GM12878 (cell line): ENCODE measurements at regions of chr1 and their contacts with region 1.

Region 1: DNA sequence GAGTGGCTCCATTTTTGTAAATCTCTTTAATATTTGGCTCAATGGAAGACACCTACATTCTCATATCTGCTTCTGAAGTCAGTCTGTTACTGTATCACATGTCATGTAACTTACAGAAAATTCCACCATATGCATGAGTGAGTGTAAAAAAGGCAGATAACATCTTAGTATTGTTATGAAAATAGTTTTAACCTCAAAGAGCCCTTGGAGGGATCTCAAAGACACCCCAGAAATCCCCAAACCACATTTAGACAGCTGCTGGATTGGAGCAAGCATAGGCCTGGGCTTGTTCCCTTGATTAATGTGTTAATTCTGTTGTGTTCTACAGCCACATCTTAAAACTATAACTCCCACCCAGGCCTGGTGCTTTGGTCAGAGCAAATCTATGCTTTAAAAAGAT is 16.9 kb downstream of the MACO1 start:
- DNase-seq: peak; percentile 79
- ATAC-seq: peak; percentile 94
- H3K4me3 ChIP-seq: no peak overlapping the region
- H3K27ac ChIP-seq: peak overlapping the region; percentile 62; the same call in 1 of the 2 replicates
- H3K4me1 ChIP-seq: peaks cover 37% of the 10 kb centered on the region
- H3K27me3 ChIP-seq: no peaks in the 10 kb centered on the region
- CTCF ChIP-seq: no peak
- EP300 ChIP-seq: peak; percentile 70 to 93
- POLR2A ChIP-seq: no peak
- RAD21 ChIP-seq: no peak

Region 2: GRCh38 chr1:25469177-25469576 is 21.6 kb after region 1 on chr1:
- CTCF ChIA-PET with region 1: interaction called, 6 read pairs
- POLR2A ChIA-PET with region 1: interaction called, 17 read pairs
- RAD21 ChIA-PET with region 1: interaction called, 5 read pairs
- SMC1A ChIA-PET with region 1: interaction called, 52 read pairs
- in situ Hi-C with region 1: no loop called
- intact Hi-C with region 1: no loop called
- DNase-seq: no peak
- ATAC-seq: no peak
- H3K4me3 ChIP-seq: no peak overlapping the region
- H3K27ac ChIP-seq: no peak overlapping the region
- H3K4me1 ChIP-seq: peaks cover 11% of the 10 kb centered on the region
- H3K27me3 ChIP-seq: no peaks in the 10 kb centered on the region
- CTCF ChIP-seq: no peak
- EP300 ChIP-seq: no peak
- POLR2A ChIP-seq: no peak
- RAD21 ChIP-seq: no peak

Region 3: GRCh38 chr1:25476186-25477097 is 28.9 kb after region 1 on chr1:
- CTCF ChIA-PET with region 1: interaction called, 36 read pairs
- POLR2A ChIA-PET with region 1: interaction called, 54 read pairs
- RAD21 ChIA-PET with region 1: interaction called, 56 read pairs
- SMC1A ChIA-PET with region 1: interaction called, 52 read pairs
- in situ Hi-C with region 1: no loop called
- intact Hi-C with region 1: no loop called
- DNase-seq: peak; percentile 26
- ATAC-seq: peak; percentile 55
- H3K4me3 ChIP-seq: no peak overlapping the region
- H3K27ac ChIP-seq: peak overlapping the region; percentile 13; the same call in 1 of the 2 replicates
- H3K4me1 ChIP-seq: peaks cover 13% of the 10 kb centered on the region
- H3K27me3 ChIP-seq: no peaks in the 10 kb centered on the region
- CTCF ChIP-seq: no peak
- EP300 ChIP-seq: peak in 1 of 2 experiments; percentile 68; a peak in 2 of 4 replicates
- POLR2A ChIP-seq: no peak
- RAD21 ChIP-seq: no peak

Region 4: DNA sequence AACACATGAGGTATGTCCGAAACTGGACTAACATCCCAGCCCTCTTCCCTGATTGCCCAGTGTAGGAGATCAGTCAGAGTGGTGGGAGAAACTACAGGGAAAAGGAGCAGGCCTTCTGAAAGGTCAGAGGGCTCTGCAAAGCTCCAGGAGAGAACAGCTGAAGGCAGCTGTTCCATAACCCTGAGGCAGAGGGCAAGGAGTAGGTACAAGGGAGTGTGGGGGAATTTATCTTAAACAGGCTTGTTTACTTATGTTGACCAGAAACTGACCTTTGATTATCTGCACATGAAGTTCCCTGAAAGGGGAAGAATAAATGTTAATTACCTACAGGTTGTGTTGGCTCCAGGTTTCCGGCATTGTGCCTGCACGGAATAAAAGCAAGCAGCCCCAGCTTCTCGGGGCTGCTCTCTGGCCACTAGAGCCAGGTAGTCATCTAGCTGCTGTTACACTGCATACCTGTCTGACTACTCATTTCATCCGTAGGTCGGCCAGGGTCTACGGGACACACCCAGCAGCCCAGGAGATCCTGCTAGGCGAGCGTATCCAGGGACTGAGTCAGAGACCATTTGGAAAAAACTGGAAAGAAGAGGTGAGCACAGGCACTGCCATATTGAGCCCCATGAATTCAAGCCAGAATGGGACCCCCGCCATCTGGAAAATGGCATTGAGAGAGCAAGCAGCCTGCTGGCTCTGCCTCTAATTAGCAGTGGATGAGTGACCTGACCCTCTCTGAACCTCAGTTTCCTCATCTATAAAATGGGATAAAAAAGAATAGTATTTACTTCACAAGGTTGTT is 442.9 kb after region 1 on chr1:
- CTCF ChIA-PET with region 1: no interaction called
- POLR2A ChIA-PET with region 1: no interaction called
- RAD21 ChIA-PET with region 1: no interaction called
- SMC1A ChIA-PET with region 1: no interaction called
- in situ Hi-C with region 1: no loop called
- intact Hi-C with region 1: no loop called
- DNase-seq: no peak
- ATAC-seq: no peak
- H3K4me3 ChIP-seq: no peak overlapping the region
- H3K27ac ChIP-seq: no peak overlapping the region
- H3K4me1 ChIP-seq: peaks cover under 1% of the 10 kb centered on the region; the same call in 1 of the 2 replicates
- H3K27me3 ChIP-seq: no peaks in the 10 kb centered on the region
- CTCF ChIP-seq: no peak
- EP300 ChIP-seq: no peak
- POLR2A ChIP-seq: no peak
- RAD21 ChIP-seq: no peak